Lower leg skin (tissue), 4 donors: ENCODE measurements at regions of chr12 and their contacts with region 1.

Region 1: DNA sequence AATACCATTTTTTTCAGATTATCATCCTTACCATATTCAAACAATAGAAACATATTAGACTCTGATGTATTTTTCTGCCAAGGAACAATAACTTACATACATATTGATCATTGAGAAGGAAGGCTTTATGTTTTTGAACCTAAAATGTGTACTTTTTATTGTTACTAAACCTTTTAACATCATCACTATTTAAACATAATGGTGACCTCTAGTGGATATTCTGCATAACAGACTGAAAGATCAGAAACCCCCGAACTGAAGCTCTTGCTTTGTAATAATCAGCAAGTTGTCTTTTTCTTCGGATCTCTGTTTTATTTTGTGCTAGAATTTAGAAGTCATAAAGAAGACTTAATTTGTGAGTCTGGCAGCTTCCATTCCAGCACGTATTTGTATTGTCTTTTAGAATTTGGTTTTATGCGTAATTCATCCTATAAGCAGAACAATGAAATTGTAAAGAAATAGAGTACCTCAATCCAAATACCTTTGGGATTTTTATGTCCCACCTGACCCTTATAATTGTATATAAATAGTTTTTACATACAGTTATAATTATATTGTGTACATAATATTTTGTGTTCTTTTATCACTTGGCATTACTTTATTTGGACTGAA is 125.9 kb upstream of the ATF1 start:
- DNase-seq: no peak
- H3K4me3 ChIP-seq: no peak overlapping the region
- CTCF ChIP-seq: peak in 1 of 3 donors; percentile 17
- POLR2A ChIP-seq: no peak

Region 2: GRCh38 chr12:50504798-50505385 is 133.1 kb before region 1 on chr12 and contains the start of gene DIP2B:
- intact Hi-C with region 1: loop called (anchors 5 kb)
- DNase-seq: peak; percentile 95 to 99
- H3K4me3 ChIP-seq: peak within 1 kb of the TSS; percentile 61
- CTCF ChIP-seq: peak in 1 of 3 donors; percentile 88
- POLR2A ChIP-seq: no peak
- total RNA-seq, gene DIP2B: 56.9 to 104 (median 68.6) TPM

Region 3: GRCh38 chr12:50621399-50622300 is 16.3 kb before region 1 on chr12:
- intact Hi-C with region 1: no loop called
- DNase-seq: no peak
- H3K4me3 ChIP-seq: no peak overlapping the region
- CTCF ChIP-seq: no peak
- POLR2A ChIP-seq: no peak

Region 4: DNA sequence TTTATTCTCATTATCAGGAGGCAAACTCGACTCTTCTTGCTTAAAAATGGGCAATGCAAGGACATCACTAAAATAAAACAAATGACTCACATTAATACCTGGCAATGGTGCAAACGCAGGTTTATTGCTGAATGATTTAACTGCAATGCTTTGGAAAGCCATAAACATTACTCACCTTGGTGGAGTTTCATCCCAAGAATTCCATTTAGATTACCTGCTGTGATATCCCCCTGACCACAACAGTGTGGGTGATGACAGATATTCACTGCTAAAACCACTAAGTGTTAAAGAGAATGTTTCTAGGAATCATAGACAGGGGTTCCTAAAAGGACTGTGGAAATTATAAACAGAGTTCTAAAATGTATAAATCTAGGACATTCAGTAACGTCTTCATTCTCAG is 480.7 kb after region 1 on chr12:
- intact Hi-C with region 1: no loop called
- DNase-seq: no peak
- H3K4me3 ChIP-seq: no peak overlapping the region
- CTCF ChIP-seq: no peak
- POLR2A ChIP-seq: no peak